ENCODE measurements at regions of chr10 and their contacts with region 1.

Region 1: GRCh38 chr10:73886085-73886529 is 11.8 kb upstream of the CAMK2G start:
- DNase-seq: peak; percentile 84
- ATAC-seq: peak; percentile 77 to 86
- H3K4me3 ChIP-seq: no peak overlapping the region
- H3K27ac ChIP-seq: peak overlapping the region; percentile 97 to 98
- H3K4me1 ChIP-seq: peaks cover 51% of the 10 kb centered on the region
- CTCF ChIP-seq: peak; percentile 93
- EP300 ChIP-seq: no peak
- POLR2A ChIP-seq: no peak
- RAD21 ChIP-seq: peak; percentile 99

Region 2: GRCh38 chr10:73874267-73875138 is 11.6 kb before region 1 on chr10 and contains the start of gene CAMK2G:
- CTCF ChIA-PET with region 1: interaction called, 40 read pairs
- POLR2A ChIA-PET with region 1: interaction called, 4 read pairs
- DNase-seq: peak; percentile 81
- ATAC-seq: peak; percentile 91 to 93
- H3K4me3 ChIP-seq: peak within 1 kb of the TSS; percentile 90
- H3K27ac ChIP-seq: peak within 1 kb of the TSS; percentile 76 to 96
- H3K4me1 ChIP-seq: peaks cover 31% of the 10 kb centered on the region
- CTCF ChIP-seq: no peak
- EP300 ChIP-seq: no peak
- POLR2A ChIP-seq: peak; percentile 78
- RAD21 ChIP-seq: no peak
- polyA plus RNA-seq, gene CAMK2G: 22.6 and 27.5 TPM in 2 replicates

Region 3: GRCh38 chr10:73908853-73909538 is 22.9 kb after region 1 on chr10:
- CTCF ChIA-PET with region 1: interaction called, 162 read pairs
- POLR2A ChIA-PET with region 1: interaction called, 98 read pairs
- DNase-seq: peak; percentile 81 to 93
- ATAC-seq: peak; percentile 51; a peak in 5 of 6 replicates
- H3K4me3 ChIP-seq: peak overlapping the region; percentile 60; the same call in 2 of the 3 replicates
- H3K27ac ChIP-seq: peak overlapping the region; percentile 91 to 96
- H3K4me1 ChIP-seq: peaks cover 79% of the 10 kb centered on the region
- CTCF ChIP-seq: no peak
- EP300 ChIP-seq: peak; percentile 55 to 74; a peak in 3 of 5 replicates
- POLR2A ChIP-seq: no peak
- RAD21 ChIP-seq: peak in 1 of 2 experiments; percentile 13; a peak in 1 of 5 replicates

Region 4: DNA sequence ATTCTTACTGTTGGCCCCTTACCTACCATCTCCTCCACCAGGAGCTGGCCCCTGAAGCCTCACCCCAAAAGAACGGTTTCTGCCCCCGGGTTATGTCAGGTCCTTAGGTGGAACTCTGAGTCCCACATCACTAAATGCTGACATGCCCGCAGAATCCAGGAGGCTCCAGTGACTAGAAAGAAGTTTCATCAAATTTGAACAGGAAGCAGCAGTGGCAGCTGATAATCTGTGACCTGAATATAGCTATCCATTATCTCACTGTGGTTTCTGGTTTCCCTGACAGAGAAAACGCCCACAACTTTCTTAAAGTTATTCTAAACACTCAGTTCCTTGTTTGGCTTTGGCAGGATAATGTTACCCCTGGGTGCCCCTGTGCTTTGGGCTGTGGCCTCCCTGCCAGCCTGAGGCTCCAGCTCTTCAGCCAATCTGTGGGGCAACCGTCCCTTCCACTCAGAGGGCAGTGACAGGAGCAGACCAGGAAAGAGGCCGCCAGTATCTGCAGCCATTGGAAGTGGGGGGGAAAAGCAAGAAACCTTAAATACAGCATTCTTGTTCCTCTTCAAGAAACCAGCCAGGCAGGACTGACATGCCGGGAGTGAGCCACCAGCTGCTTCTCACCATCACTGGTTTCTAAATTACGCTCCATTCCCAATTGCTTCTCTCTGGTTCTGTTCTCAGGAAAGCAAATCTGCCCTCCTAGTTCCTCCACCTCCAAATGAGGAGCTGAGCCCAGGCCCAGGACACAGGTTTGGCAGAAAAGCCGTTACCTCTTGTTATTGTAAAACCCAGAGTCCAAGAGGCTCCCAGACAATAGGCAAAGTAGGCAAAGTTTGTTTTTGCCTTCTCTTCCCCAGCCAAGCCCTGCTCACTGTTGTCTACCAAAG is 70.6 kb after region 1 on chr10:
- CTCF ChIA-PET with region 1: interaction called, 936 read pairs
- POLR2A ChIA-PET with region 1: interaction called, 3 read pairs
- DNase-seq: no peak
- ATAC-seq: peak; percentile 26 to 57; a peak in 3 of 6 replicates
- H3K4me3 ChIP-seq: no peak overlapping the region
- H3K27ac ChIP-seq: peak overlapping the region; percentile 29 to 30; a peak in 4 of 6 replicates
- H3K4me1 ChIP-seq: peaks cover 13% of the 10 kb centered on the region; the same call in 2 of the 3 replicates
- CTCF ChIP-seq: no peak
- EP300 ChIP-seq: no peak
- POLR2A ChIP-seq: no peak
- RAD21 ChIP-seq: no peak

Region 5: DNA sequence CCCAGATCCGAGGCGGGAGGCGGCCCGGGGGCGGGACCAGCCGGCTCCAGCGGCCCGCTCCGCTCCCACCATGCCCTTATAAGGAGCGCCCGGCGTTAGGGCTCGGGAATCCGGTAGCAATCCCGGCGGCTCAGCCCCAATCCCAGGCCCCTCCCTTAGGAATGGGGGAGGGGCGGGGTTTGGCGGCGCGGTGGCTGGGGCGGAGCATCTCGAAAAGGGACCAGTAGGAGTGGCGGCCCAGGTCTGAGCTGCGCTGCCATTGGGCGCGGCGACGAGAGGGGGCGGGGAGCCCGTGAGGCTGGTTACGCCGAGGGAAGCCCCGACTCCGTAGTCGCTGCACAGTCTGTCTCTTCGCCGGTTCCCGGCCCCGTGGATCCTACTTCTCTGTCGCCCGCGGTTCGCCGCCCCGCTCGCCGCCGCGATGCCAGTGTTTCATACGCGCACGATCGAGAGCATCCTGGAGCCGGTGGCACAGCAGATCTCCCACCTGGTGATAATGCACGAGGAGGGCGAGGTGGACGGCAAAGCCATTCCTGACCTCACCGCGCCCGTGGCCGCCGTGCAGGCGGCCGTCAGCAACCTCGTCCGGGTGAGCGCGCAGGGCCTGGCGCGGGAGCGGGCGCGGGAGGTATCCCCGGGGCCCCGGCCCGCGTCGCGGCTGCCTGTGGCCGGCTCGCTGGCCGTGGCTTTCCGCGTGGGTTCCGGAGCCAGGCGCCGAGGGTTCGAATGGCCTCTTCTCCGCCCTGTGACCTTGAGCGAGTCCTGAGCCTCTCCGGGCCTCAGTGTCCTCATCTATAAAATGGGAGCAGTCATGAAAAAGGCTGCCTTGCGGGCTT is 111.9 kb after region 1 on chr10 and contains the start of gene VCL:
- CTCF ChIA-PET with region 1: interaction called, 18 read pairs
- POLR2A ChIA-PET with region 1: interaction called, 4 read pairs
- DNase-seq: peak; percentile 86 to 98
- ATAC-seq: peak; percentile 94 to 95
- H3K4me3 ChIP-seq: peak within 1 kb of the TSS; percentile 97
- H3K27ac ChIP-seq: peak within 1 kb of the TSS; percentile 95
- H3K4me1 ChIP-seq: peaks cover 36% of the 10 kb centered on the region
- CTCF ChIP-seq: no peak
- EP300 ChIP-seq: no peak
- POLR2A ChIP-seq: peak; percentile 99
- RAD21 ChIP-seq: 0 out of 5 replicates have a peak, but pooled peaks of 1 of the 2 experiments have one; percentile 16
- polyA plus RNA-seq, gene VCL: 101 and 112 TPM in 2 replicates

Region 6: GRCh38 chr10:74103560-74104248 is 217.6 kb after region 1 on chr10:
- CTCF ChIA-PET with region 1: interaction called, 35 read pairs
- POLR2A ChIA-PET with region 1: interaction called, 3 read pairs
- DNase-seq: peak; percentile 48 to 51
- ATAC-seq: peak in 1 of 2 experiments; percentile 76; a peak in 3 of 6 replicates
- H3K4me3 ChIP-seq: no peak overlapping the region
- H3K27ac ChIP-seq: no peak overlapping the region
- H3K4me1 ChIP-seq: no peaks in the 10 kb centered on the region
- CTCF ChIP-seq: peak; percentile 58
- EP300 ChIP-seq: no peak
- POLR2A ChIP-seq: no peak
- RAD21 ChIP-seq: peak; percentile 59

Region 7: GRCh38 chr10:74558403-74558802 is 672.3 kb after region 1 on chr10:
- CTCF ChIA-PET with region 1: no interaction called
- POLR2A ChIA-PET with region 1: no interaction called
- DNase-seq: no peak
- ATAC-seq: no peak
- H3K4me3 ChIP-seq: no peak overlapping the region
- H3K27ac ChIP-seq: no peak overlapping the region
- H3K4me1 ChIP-seq: no peaks in the 10 kb centered on the region
- CTCF ChIP-seq: no peak
- EP300 ChIP-seq: no peak
- POLR2A ChIP-seq: no peak
- RAD21 ChIP-seq: no peak

Measured in A549 (cell line).